HEK293T (cell line): ENCODE measurements at regions of chr1 and their contacts with region 1.

Region 1: DNA sequence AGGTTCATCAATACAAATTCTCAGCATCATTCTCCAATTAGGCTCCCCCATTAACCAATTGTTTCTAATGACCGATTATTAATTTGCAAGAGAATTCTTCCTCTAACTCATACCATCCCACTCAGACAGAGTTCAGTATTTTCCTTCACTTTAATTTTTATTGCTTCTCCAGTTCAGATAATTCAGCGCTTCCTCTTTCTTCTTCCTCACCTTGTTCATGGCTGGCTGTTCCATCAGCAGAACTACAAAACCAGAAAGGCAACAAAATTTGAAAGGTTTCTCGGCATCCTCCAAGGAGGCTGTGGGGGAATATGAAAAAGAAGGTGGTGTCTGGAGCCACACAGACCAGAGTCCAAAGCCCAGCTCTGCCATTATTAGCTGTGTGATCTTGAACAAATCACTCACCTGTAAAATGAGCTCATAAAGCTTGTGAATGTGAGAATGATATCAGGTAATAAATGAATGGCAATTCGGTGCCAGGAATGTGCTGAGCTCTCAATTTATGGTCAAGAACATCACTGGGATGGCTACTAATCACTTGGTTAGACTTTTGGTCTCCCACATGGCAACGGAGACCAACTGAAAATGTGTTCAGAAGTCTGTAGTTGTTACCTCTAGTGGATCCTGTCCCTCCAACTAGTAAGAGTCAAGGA is 11.7 kb upstream of the ZNF436 start:
- DNase-seq: no peak

Region 2: GRCh38 chr1:23673086-23673813 is 291.9 kb after region 1 on chr1:
- CTCF ChIA-PET with region 1: interaction called, 10 read pairs
- POLR2A ChIA-PET with region 1: no interaction called
- DNase-seq: peak; percentile 36